ENCODE measurements at regions of chr6 and their contacts with region 1.

Region 1: GRCh38 chr6:53492860-53493634 is 51.9 kb downstream of the GCLC start:
- DNase-seq: peak; percentile 34
- ATAC-seq: peak; percentile 85
- H3K4me3 ChIP-seq: peak overlapping the region; percentile 8 to 32
- H3K27ac ChIP-seq: no peak overlapping the region
- H3K4me1 ChIP-seq: peaks cover 4 to 21% of the 10 kb centered on the region in 2 experiments; a peak in 2 of 4 replicates
- H3K27me3 ChIP-seq: no peaks in the 10 kb centered on the region
- CTCF ChIP-seq: peak; percentile 61 to 92 (median 79)
- POLR2A ChIP-seq: no peak
- RAD21 ChIP-seq: peak; percentile 91

Region 2: GRCh38 chr6:53513519-53513966 is 20.5 kb after region 1 on chr6:
- CTCF ChIA-PET with region 1: interaction called, 10 read pairs
- POLR2A ChIA-PET with region 1: no interaction called
- RAD21 ChIA-PET with region 1: no interaction called
- intact Hi-C with region 1: no loop called
- DNase-seq: no peak
- ATAC-seq: no peak
- H3K4me3 ChIP-seq: no peak overlapping the region
- H3K27ac ChIP-seq: no peak overlapping the region
- H3K4me1 ChIP-seq: no peaks in the 10 kb centered on the region
- H3K27me3 ChIP-seq: no peaks in the 10 kb centered on the region
- CTCF ChIP-seq: no peak
- POLR2A ChIP-seq: no peak
- RAD21 ChIP-seq: no peak

Region 3: GRCh38 chr6:53679446-53679933 is 186.4 kb after region 1 on chr6:
- CTCF ChIA-PET with region 1: interaction called, 13 read pairs
- POLR2A ChIA-PET with region 1: no interaction called
- RAD21 ChIA-PET with region 1: interaction called in 1 of 2 experiments, 7 read pairs
- intact Hi-C with region 1: loop called (anchors 1 kb)
- DNase-seq: peak; percentile 60
- ATAC-seq: peak; percentile 87
- H3K4me3 ChIP-seq: no peak overlapping the region
- H3K27ac ChIP-seq: no peak overlapping the region
- H3K4me1 ChIP-seq: peaks cover 0 to 3% of the 10 kb centered on the region in 2 experiments; a peak in 1 of 4 replicates
- H3K27me3 ChIP-seq: no peaks in the 10 kb centered on the region
- CTCF ChIP-seq: peak; percentile 53 to 62 (median 59); a peak in 5 of 6 replicates
- POLR2A ChIP-seq: no peak
- RAD21 ChIP-seq: peak; percentile 72

Region 4: DNA sequence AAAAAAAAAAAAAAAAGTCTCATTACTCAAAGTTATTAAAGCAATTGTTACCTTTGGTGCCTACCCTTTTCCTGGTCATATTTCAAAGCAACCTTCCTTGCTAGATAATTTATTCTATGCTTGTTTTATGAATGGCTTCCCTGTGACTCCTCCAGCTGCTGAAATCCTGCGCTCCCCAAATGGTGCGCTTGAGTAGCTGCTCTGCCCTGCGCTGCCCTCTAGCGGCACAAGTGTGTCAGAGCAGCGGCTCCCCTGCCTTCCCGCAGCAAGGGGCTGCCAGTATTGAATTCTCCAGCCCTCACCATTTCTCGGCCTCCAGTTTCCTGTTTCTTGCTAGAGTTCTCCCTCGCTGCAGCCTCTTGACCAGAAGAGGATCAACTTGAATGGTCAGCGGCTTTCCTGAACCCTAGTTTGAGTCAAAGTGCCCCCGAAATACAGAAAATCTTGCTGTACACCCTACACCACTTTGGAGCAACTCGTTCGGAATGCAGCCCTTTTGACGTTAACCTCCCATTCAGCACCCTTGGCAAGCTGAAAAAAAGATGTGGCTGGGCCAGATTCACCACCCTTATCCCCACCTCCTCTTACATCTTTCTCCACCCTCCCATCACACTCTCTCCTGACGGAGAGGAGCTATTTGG is 232.9 kb after region 1 on chr6:
- CTCF ChIA-PET with region 1: interaction called, 227 read pairs
- POLR2A ChIA-PET with region 1: interaction called, 5 read pairs
- RAD21 ChIA-PET with region 1: interaction called, 4 to 8 read pairs
- intact Hi-C with region 1: loop called (anchors 1 kb)
- DNase-seq: no peak
- ATAC-seq: peak; percentile 91
- H3K4me3 ChIP-seq: no peak overlapping the region
- H3K27ac ChIP-seq: no peak overlapping the region
- H3K4me1 ChIP-seq: peaks cover 12 to 18% of the 10 kb centered on the region in 2 experiments
- H3K27me3 ChIP-seq: no peaks in the 10 kb centered on the region
- CTCF ChIP-seq: peak; percentile 78 to 97 (median 94); a peak in 5 of 6 replicates
- POLR2A ChIP-seq: no peak
- RAD21 ChIP-seq: peak; percentile 86

Region 5: DNA sequence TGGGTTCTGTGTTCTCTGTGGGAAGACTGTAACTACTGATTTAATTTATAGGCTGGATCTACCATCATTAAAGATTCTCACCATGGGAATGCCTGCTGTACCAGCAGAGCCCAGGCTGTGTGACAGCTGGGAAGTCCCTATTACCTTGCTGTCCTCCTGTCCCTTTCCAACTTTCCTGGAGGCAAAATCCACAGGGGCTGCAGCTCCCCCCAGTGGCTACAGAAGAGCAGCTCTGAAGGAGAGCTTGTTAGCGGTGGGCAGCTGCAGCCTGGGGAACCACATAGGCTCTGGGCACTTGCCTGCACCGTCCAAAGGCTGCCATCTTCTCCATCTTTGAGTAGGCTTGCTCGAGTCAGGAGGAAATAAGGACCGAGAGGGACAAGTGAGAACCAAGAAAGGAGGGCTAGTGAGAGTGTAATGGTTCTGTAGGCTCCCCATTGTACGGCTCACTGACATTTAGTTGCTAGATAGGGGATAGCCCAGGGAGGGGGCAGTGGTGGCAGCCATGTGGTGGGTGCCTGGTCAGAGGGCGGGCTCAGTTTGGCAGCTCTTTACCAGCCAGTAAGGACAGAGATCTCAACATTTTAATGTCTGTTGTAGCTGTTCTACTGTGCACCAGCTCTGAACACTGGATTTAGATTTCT is 463.1 kb after region 1 on chr6:
- CTCF ChIA-PET with region 1: interaction called, 10 read pairs
- POLR2A ChIA-PET with region 1: no interaction called
- RAD21 ChIA-PET with region 1: no interaction called
- intact Hi-C with region 1: loop called (anchors 1 kb)
- DNase-seq: peak; percentile 72
- ATAC-seq: peak; percentile 99
- H3K4me3 ChIP-seq: no peak overlapping the region
- H3K27ac ChIP-seq: no peak overlapping the region
- H3K4me1 ChIP-seq: peaks cover 0 to 8% of the 10 kb centered on the region in 2 experiments; a peak in 1 of 4 replicates
- H3K27me3 ChIP-seq: no peaks in the 10 kb centered on the region
- CTCF ChIP-seq: peak; percentile 78 to 85 (median 82)
- POLR2A ChIP-seq: no peak
- RAD21 ChIP-seq: peak; percentile 90